Dorsolateral prefrontal cortex (tissue), 120 donors: ENCODE measurements at regions of chr19 and their contacts with region 1.

Region 1: DNA sequence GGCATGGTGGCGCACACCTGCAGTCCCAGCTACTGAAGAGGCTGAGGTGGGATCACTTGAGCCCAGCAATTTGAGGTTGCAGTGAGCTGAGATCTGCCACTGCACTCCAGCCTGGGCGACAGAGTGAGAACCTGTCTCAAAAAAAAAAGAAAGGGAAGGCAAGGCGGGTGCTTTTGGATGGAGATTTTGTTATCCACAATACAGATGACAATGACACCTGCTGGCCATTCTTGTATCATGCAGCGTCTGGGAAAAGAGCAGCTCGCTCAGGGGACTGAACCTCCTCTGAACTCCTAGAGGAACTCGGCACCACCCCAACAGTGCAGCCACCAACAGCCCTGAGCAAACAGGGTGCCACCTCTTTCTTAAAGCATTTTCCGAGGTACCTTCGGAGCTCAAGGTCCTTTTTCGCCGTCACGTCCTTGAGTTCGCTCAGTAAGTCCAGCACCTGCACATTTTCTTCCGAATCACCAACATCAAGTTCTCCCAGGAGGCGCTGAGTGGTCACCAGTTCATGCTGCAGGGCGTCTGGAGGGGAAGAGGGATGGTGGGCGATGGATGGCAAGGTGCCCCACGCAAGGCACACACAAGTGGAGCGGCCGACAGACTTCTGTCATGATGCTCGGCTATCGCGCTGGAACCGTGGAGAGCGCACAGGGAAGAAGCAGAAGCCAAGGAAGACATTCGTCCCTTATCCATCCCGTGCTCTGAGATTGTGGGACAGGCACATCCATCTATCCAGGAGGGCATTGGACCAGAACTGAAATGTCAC is 22.6 kb downstream of the HAUS8 start:
- DNase-seq: peak in 7 of 10 donors; percentile 33 to 58 (median 44)
- H3K4me3 ChIP-seq: no peak overlapping the region
- H3K27ac ChIP-seq: no peak overlapping the region
- H3K27me3 ChIP-seq: no peaks in the 10 kb centered on the region
- CTCF ChIP-seq: peak; percentile 43 to 80 (median 70)

Region 2: DNA sequence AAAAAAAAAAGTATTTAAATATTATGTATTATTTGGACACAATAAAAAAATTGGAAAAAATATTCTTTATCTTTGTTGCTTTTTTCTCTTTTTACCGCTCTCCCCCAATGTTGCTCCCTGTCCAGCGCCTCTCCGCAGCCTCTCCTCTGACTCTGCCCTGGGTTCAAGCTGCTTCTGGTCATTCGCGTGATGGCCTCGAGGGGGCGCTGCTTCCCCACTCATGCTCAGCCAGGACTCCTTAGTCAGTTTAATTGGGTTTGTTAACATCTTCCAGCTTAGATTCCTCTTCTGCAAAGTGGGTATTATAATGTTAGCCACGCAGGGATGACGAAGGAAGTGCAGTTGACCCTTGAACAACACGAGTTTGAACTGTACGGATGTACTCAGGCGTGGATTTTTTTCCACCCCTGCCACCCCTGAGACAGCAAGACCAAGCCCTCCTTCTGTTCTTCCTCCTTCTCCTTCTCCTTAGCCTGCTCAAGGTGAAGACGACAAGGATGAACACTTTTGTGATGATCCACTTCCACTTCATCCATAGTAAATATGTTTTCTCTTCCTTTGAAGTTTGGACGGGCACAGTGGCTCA is 337.8 kb before region 1 on chr19:
- intact Hi-C with region 1: loop called (anchors 2 to 10 kb)
- DNase-seq: peak; percentile 16 to 80 (median 64)
- H3K4me3 ChIP-seq: peak overlapping the region in 5 of 59 donors; percentile 1 to 19 (median 4)
- H3K27ac ChIP-seq: no peak overlapping the region
- H3K27me3 ChIP-seq: no peaks in the 10 kb centered on the region
- CTCF ChIP-seq: peak; percentile 63 to 94 (median 87)

Region 3: DNA sequence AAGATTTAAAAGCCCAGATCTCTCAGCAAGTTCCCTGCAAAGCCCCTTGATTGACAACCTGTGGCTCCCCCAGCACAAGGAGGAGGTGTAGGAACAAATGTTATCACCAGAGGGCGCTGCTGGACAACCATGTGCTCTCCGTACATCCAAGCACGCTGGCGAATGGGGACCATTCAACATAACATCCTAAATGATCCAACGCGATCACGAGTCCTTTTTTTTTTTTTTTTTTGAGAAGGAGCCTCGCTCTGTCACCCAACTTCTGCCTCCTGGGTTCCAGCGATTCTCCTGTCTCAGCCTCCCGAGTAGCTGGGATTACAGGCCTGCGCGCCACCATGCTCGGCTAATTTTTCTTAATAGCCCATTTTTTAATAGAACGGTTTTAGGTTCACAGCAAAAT is 281.0 kb before region 1 on chr19:
- intact Hi-C with region 1: loop called (anchors 5 kb)
- DNase-seq: peak; percentile 36 to 75 (median 66)
- H3K4me3 ChIP-seq: no peak overlapping the region
- H3K27ac ChIP-seq: no peak overlapping the region
- H3K27me3 ChIP-seq: no peaks in the 10 kb centered on the region
- CTCF ChIP-seq: peak; percentile 45 to 88 (median 80)